Left lung (tissue), 14 donors: ENCODE measurements at regions of chr4 and their contacts with region 1.

Region 1: DNA sequence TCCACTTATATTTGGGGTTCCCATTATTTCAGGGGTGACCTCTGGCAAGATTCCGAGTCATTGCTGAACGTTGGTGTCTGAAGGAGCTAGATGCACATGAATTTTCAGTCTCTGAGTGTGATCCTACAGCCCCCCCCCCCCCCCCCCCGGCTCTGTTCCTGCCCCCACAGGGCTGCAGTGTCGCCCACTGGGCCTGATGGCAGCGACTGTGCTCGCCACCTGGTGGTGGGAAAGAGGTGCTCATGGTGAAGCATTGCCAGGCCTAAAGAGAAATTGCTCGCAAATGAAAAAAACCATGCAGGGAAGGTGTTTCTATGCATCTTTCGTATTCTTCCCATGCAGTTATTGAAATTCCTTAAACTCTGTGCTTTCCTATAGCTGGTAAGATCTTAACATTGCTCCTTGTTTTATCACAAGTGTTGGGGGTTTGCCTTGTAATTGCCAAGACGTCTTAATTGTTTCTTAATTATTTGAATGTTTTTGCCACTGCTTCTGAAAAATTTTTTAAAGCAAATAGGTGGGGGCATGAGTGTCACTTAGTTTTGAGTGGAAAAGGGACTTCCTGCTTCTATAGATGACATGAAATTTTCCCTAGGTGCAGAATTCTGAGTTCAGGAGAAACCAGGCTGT is 63.2 kb downstream of the CLDN22 start:
- DNase-seq: peak in 1 of 4 donors; percentile 65
- ATAC-seq: peak; percentile 68
- H3K4me3 ChIP-seq: no peak overlapping the region
- H3K27ac ChIP-seq: no peak overlapping the region
- H3K4me1 ChIP-seq: peaks cover 4 to 10% of the 10 kb centered on the region in 2 donors
- H3K27me3 ChIP-seq: no peaks in the 10 kb centered on the region
- CTCF ChIP-seq: peak; percentile 65 to 76

Region 2: DNA sequence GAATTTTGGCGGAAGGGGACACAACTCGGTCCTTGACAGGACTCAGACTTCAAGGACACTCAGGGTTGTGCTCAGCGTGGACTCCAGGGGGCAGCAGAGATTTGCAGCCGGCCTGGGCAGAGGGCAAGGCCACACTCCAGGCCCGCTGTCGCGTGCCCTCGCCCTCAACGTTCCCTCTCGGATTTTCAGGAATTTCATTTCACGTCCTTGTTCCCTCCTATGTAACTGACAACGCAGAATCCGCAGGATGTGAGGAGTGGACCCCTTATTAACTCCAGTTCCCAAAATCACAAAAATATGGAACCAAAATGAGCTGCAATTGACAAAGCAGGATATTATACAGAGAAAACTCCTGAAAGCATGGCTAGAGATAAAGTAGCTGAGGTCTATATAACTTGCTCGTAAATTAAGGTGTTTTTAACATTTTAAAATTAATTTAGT is 318.6 kb before region 1 on chr4:
- intact Hi-C with region 1: loop called in 1 of 2 experiments (anchors 10 kb)
- DNase-seq: peak; percentile 55 to 91 (median 66)
- ATAC-seq: peak; percentile 100
- H3K4me3 ChIP-seq: no peak overlapping the region
- H3K27ac ChIP-seq: no peak overlapping the region
- H3K4me1 ChIP-seq: peaks cover 0 to 2% of the 10 kb centered on the region in 2 donors
- H3K27me3 ChIP-seq: no peaks in the 10 kb centered on the region
- CTCF ChIP-seq: peak; percentile 89 to 94

Region 3: DNA sequence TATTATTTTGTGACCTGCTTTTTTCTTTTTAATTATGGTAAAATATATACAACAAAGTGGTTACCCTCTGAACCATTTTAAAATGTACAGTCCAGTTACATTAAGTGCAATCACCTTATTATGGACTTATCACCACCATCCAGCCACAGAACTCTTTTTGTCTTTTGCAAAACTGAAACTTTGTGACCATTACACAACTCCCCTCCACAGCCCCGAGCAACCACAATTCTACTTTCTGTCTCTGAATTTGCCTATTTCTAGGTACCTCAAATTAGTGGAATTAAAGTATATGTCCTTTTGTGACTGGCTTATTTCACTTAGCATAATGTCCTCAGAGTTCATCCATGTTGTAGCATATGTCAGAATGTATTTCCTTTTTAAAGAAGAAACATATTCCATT is 197.1 kb before region 1 on chr4:
- intact Hi-C with region 1: loop called in 1 of 2 experiments (anchors 10 kb)
- DNase-seq: no peak
- ATAC-seq: no peak
- H3K4me3 ChIP-seq: no peak overlapping the region
- H3K27ac ChIP-seq: no peak overlapping the region
- H3K4me1 ChIP-seq: no peaks in the 10 kb centered on the region
- H3K27me3 ChIP-seq: no peaks in the 10 kb centered on the region
- CTCF ChIP-seq: no peak

Region 4: GRCh38 chr4:183074296-183074990 is 182.4 kb before region 1 on chr4:
- intact Hi-C with region 1: loop called (anchors 5 to 10 kb)
- DNase-seq: no peak
- ATAC-seq: peak; percentile 74
- H3K4me3 ChIP-seq: no peak overlapping the region
- H3K27ac ChIP-seq: peak overlapping the region in 1 of 2 donors; percentile 45
- H3K4me1 ChIP-seq: no peaks in the 10 kb centered on the region
- H3K27me3 ChIP-seq: no peaks in the 10 kb centered on the region
- CTCF ChIP-seq: no peak